ENCODE measurements at regions of chr18 and their contacts with region 1.

Region 1: DNA sequence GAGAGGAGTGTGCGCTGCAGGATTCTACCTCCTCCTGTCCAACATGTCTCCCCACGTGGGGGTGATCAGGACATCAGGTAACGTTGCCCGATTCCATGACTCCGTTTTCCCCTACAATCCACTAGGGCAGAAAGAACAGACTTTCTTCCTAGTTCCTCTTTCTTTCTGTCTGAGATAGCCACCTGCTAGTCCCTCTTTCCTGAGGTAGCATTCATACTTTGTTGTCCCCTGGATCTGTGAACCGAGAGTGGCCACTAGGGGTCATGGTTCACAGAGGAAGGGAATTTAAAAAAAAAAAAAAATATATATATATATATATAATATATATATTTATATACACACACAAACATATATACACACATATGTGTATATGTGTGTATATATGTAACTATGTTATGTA is 210.0 kb upstream of the ZNF521 start:
- DNase-seq: peak; percentile 59
- H3K4me3 ChIP-seq: no peak overlapping the region
- H3K27ac ChIP-seq: no peak overlapping the region
- H3K4me1 ChIP-seq: no peaks in the 10 kb centered on the region
- CTCF ChIP-seq: peak; percentile 66

Region 2: DNA sequence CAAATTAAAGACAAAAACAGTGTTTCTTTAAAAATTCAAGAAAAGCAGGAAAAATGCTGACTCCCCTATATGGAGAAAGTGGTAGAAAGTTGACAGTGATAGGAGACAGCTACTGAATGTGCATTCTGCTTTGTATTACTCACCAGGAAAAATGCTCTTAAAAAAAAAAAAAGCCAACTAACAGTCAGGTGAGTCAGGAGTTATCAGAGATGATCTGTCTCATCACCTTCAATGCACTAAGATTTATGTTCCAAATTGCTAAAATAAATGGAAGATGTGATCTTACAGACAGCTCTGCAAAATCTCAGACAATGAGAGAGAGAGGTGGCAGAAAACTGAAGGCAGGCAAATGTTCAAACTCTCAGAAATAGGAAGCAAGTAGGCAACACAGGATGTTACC is 162.4 kb before region 1 on chr18:
- CTCF ChIA-PET with region 1: no interaction called
- POLR2A ChIA-PET with region 1: no interaction called
- intact Hi-C with region 1: loop called (anchors 10 kb)
- DNase-seq: no peak
- H3K4me3 ChIP-seq: no peak overlapping the region
- H3K27ac ChIP-seq: no peak overlapping the region
- H3K4me1 ChIP-seq: no peaks in the 10 kb centered on the region
- CTCF ChIP-seq: no peak

Measured in OCI-LY7 (cell line).